ENCODE measurements at regions of chr2 and their contacts with region 1.

Region 1: DNA sequence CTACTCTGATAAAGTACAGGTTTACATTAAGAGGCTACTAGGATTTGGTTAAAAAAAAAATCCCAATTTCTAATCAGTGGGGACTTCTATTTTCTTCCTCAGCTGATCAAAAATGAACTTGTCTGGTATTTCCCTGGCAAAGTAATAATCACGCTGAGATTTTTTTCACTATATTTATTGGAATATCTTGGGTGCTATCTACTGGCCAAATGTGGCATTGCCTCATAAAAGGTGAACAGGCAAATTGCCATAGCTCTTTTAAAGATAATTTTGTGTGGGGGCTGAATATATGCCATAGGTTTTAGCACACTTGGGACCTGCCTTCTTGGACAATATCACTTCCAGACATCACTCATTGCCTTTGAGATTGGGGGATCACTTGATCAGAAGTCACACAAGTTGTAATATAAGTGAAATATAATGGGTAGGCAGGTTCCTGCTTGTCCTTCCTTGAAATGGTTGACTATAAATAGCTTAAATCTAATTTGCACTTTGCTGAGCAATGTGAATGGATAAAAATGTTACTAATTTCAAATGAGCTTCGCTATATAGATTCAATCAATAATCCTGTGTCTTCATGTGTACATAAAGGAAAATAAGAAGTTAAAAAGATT is 7.0 kb upstream of the NXPH2 start:
- DNase-seq: peak in 1 of 2 experiments; percentile 57
- H3K4me3 ChIP-seq: no peak overlapping the region
- H3K4me3 Mint-ChIP-seq: no peak overlapping the region
- H3K27ac Mint-ChIP-seq: no peak overlapping the region
- H3K4me1 ChIP-seq: 0 out of 2 replicates have a peak, but pooled peaks cover 6% of the 10 kb centered on the region
- H3K4me1 Mint-ChIP-seq: no peaks in the 10 kb centered on the region
- H3K27me3 ChIP-seq: no peaks in the 10 kb centered on the region
- H3K27me3 Mint-ChIP-seq: no peaks in the 10 kb centered on the region
- CTCF ChIP-seq: peak; percentile 71 to 82

Region 2: GRCh38 chr2:137865954-137866540 is 921.1 kb before region 1 on chr2:
- CTCF ChIA-PET with region 1: interaction called, 4 read pairs
- POLR2A ChIA-PET with region 1: no interaction called
- intact Hi-C with region 1: loop called (anchors 1 kb)
- DNase-seq: peak; percentile 73 to 79
- H3K4me3 ChIP-seq: no peak overlapping the region
- H3K4me3 Mint-ChIP-seq: no peak overlapping the region
- H3K27ac Mint-ChIP-seq: no peak overlapping the region
- H3K4me1 ChIP-seq: peaks cover 14% of the 10 kb centered on the region
- H3K4me1 Mint-ChIP-seq: no peaks in the 10 kb centered on the region
- H3K27me3 ChIP-seq: no peaks in the 10 kb centered on the region
- H3K27me3 Mint-ChIP-seq: no peaks in the 10 kb centered on the region
- CTCF ChIP-seq: peak; percentile 86 to 89

Region 3: GRCh38 chr2:137910641-137911040 is 876.5 kb before region 1 on chr2:
- CTCF ChIA-PET with region 1: interaction called, 5 read pairs
- POLR2A ChIA-PET with region 1: no interaction called
- intact Hi-C with region 1: loop called (anchors 1 kb)
- DNase-seq: peak in 1 of 2 experiments; percentile 26
- H3K4me3 ChIP-seq: no peak overlapping the region
- H3K4me3 Mint-ChIP-seq: no peak overlapping the region
- H3K27ac Mint-ChIP-seq: no peak overlapping the region
- H3K4me1 ChIP-seq: no peaks in the 10 kb centered on the region
- H3K4me1 Mint-ChIP-seq: peaks cover 14% of the 10 kb centered on the region
- H3K27me3 ChIP-seq: no peaks in the 10 kb centered on the region
- H3K27me3 Mint-ChIP-seq: no peaks in the 10 kb centered on the region
- CTCF ChIP-seq: peak; percentile 52 to 74

Region 4: DNA sequence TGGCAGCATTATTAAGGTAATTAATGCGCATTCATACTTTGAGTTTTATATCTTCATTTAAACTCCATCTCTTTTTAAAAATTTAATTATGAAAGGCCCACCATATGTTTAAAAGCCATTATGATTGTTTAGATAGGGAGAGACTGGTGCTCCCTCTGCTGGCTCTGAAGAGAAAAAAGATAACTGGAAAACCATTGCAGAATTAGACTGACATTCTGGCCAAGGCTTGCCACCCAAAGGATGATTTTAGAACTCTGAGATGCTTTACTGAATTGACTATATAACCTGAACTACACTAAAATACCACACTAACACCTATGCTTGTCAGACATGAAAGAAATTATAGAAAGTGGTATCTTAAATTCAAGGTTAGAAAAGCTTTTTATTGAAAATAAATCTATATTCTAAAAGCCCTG is 413.2 kb before region 1 on chr2:
- CTCF ChIA-PET with region 1: no interaction called
- POLR2A ChIA-PET with region 1: no interaction called
- intact Hi-C with region 1: loop called (anchors 1 kb)
- DNase-seq: peak in 1 of 2 experiments; percentile 43
- H3K4me3 ChIP-seq: no peak overlapping the region
- H3K4me3 Mint-ChIP-seq: no peak overlapping the region
- H3K27ac Mint-ChIP-seq: no peak overlapping the region
- H3K4me1 ChIP-seq: no peaks in the 10 kb centered on the region
- H3K4me1 Mint-ChIP-seq: peaks cover 6% of the 10 kb centered on the region
- H3K27me3 ChIP-seq: no peaks in the 10 kb centered on the region
- H3K27me3 Mint-ChIP-seq: no peaks in the 10 kb centered on the region
- CTCF ChIP-seq: peak; percentile 75 to 80

Region 5: GRCh38 chr2:138493334-138493733 is 293.8 kb before region 1 on chr2:
- CTCF ChIA-PET with region 1: interaction called, 4 read pairs
- POLR2A ChIA-PET with region 1: no interaction called
- intact Hi-C with region 1: loop called (anchors 2 kb)
- DNase-seq: peak in 1 of 2 experiments; percentile 74
- H3K4me3 ChIP-seq: no peak overlapping the region
- H3K4me3 Mint-ChIP-seq: no peak overlapping the region
- H3K27ac Mint-ChIP-seq: peak overlapping the region; percentile 76
- H3K4me1 ChIP-seq: peaks cover 70% of the 10 kb centered on the region
- H3K4me1 Mint-ChIP-seq: peaks cover 39% of the 10 kb centered on the region
- H3K27me3 ChIP-seq: no peaks in the 10 kb centered on the region
- H3K27me3 Mint-ChIP-seq: no peaks in the 10 kb centered on the region
- CTCF ChIP-seq: no peak

Region 6: DNA sequence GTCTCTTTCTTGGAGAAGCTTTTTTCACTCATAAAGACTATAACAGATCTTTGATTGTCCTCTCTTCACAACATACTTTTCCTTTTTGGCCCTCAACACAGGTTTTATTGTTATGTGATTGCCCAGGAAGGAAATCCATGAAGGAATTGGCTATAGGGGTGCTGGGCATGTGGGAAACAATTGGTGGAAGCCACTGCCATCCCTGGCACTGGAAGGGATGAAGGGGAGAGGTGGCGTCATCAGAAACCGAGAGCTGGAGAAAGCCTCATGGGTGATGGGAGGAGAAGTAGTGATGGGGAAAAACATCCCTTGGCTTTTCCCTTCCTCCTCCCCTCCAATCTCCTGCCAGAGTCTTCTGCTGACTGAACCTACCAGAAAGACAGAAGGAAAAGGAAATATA is 179.4 kb before region 1 on chr2:
- CTCF ChIA-PET with region 1: no interaction called
- POLR2A ChIA-PET with region 1: no interaction called
- intact Hi-C with region 1: loop called (anchors 5 kb)
- DNase-seq: no peak
- H3K4me3 ChIP-seq: no peak overlapping the region
- H3K4me3 Mint-ChIP-seq: no peak overlapping the region
- H3K27ac Mint-ChIP-seq: no peak overlapping the region
- H3K4me1 ChIP-seq: peaks cover 22% of the 10 kb centered on the region
- H3K4me1 Mint-ChIP-seq: peaks cover 27% of the 10 kb centered on the region
- H3K27me3 ChIP-seq: no peaks in the 10 kb centered on the region
- H3K27me3 Mint-ChIP-seq: no peaks in the 10 kb centered on the region
- CTCF ChIP-seq: no peak

Region 7: GRCh38 chr2:138727956-138728355 is 59.2 kb before region 1 on chr2:
- CTCF ChIA-PET with region 1: interaction called, 5 read pairs
- POLR2A ChIA-PET with region 1: no interaction called
- intact Hi-C with region 1: loop called (anchors 1 kb)
- DNase-seq: no peak
- H3K4me3 ChIP-seq: no peak overlapping the region
- H3K4me3 Mint-ChIP-seq: no peak overlapping the region
- H3K27ac Mint-ChIP-seq: no peak overlapping the region
- H3K4me1 ChIP-seq: peaks cover 28% of the 10 kb centered on the region
- H3K4me1 Mint-ChIP-seq: peaks cover 7% of the 10 kb centered on the region
- H3K27me3 ChIP-seq: no peaks in the 10 kb centered on the region
- H3K27me3 Mint-ChIP-seq: no peaks in the 10 kb centered on the region
- CTCF ChIP-seq: no peak

Region 8: DNA sequence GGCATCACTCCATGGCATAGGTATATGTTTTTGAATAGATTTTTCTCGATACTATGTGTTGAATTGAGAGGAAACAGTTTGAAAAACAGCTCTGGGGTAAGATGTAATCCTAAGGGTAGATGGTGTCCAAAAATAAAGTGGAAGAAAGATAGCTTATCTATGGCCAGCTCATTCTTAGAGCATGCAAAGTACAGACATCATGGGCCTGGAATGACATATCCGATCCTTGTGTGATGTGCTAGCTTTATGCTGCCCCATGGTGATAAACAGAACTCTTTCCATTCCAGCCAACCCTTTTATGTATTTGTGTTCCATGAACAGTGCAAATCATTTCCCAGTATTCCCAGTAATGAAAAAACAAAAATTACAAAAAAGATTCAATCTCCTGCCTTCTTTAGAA is 383.2 kb after region 1 on chr2:
- CTCF ChIA-PET with region 1: no interaction called
- POLR2A ChIA-PET with region 1: no interaction called
- intact Hi-C with region 1: no loop called
- DNase-seq: no peak
- H3K4me3 ChIP-seq: no peak overlapping the region
- H3K4me3 Mint-ChIP-seq: no peak overlapping the region
- H3K27ac Mint-ChIP-seq: no peak overlapping the region
- H3K4me1 ChIP-seq: no peaks in the 10 kb centered on the region
- H3K4me1 Mint-ChIP-seq: no peaks in the 10 kb centered on the region
- H3K27me3 ChIP-seq: no peaks in the 10 kb centered on the region; the same call in 1 of the 2 replicates
- H3K27me3 Mint-ChIP-seq: peaks cover 7% of the 10 kb centered on the region
- CTCF ChIP-seq: no peak